Posterior vena cava (tissue), 2 donors: ENCODE measurements at regions of chr2 and their contacts with region 1.

Region 1: DNA sequence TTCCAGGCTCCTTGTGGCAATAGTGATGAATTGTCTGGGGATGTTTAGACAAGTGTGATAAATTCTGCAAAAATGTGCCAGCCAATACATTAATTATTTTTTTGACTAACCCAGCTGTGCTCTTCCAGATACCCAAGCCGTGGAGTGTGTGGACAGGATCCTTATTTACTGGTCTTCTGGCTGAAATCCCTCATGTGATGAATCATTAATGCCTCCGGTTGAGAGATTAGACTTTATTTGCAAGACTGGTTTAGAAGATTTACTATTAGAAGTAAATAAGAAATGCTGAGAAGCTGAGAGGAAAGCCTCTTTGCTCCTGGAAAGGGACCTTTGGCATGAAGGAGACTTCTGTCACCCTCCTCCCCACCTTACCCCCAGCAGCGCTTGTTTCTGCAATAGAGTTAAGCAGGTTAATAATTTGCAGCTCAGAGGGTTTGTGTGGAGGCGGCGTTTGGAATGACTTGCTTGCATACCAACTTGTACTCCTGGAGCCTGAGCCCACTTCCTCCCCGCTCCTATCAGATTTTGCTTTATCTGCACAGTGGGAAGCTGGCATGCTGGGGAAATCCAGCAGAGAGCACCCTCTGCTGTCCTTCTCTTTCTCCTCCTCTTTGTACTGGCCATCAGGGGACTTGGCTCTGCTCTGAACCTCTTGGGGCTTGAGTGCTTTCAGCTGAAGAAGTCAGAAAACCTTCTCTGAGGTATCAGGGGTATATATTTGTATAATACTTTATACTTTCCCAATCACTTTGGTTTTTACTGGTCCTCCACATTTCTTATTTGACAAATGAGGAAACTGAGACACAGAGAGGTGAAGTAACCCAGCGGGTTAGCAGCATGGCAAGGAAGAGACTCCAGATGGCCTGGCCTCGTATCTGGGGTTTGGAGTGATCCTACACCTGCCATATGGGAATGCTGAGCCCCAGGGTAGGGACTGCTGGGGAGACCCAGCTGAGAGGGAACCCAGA is 16.3 kb downstream of the SLC3A1 start:
- DNase-seq: no peak

Region 2: GRCh38 chr2:44087036-44087713 is 204.4 kb before region 1 on chr2:
- intact Hi-C with region 1: loop called in 1 of 2 experiments (anchors 5 kb)
- DNase-seq: peak; percentile 96

Region 3: DNA sequence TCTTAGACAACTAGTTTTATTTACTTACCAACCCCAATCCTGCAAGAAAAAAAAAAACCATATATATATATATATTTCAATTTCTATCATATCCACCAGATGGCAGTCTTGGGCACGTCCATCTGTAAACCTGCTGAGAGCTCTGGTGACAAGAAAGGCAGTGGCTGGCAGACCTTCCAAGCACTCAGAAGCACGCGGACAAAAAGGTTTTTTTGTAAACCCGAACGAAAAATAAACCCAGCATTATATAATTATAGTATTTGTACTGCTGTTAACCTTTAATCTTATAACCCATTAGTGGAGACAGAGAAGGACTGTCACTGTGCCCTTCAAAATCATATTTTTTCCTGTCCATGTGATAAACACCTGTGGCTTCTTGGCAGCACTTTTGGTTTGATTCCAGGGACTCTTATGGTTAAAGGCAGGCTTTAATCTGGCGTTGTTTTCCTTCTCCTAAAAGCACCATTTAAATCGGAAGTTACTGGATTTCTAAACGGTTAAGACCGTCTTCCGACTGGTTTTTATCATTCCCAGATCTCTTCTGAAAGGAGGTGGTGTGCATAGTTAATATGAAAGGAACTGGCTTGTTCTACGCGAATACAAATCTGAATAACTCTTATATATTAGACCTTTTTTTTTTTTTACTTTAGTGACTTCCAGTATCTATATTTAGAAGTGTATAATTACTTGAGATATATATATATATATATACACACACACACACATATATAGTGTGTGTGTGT is 47.3 kb before region 1 on chr2:
- intact Hi-C with region 1: loop called in 1 of 2 experiments (anchors 5 kb)
- DNase-seq: no peak

Region 4: DNA sequence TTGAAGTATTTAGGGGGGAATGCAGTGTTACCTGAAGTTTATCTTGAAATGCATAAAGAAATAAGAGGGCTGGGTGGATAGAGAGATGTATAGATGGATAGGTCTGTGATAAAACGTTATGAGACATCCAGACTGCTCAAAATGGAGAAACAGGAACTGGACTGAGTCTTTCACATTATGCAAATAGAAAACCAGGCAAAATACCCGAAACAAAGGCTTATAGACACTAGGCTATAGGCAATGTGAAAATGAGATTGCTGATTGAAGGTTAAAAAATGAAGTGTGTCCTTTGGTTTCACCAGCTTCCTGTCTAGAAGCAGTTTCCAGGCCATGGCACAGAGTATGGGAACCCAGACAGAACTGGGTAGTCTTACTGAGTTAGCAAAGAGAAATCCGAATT is 41.2 kb before region 1 on chr2:
- intact Hi-C with region 1: loop called in 1 of 2 experiments (anchors 5 kb)
- DNase-seq: no peak

Region 5: GRCh38 chr2:44320832-44321231 is 29.3 kb after region 1 on chr2:
- intact Hi-C with region 1: no loop called
- DNase-seq: no peak